Sigmoid colon (tissue), 7 donors: ENCODE measurements at regions of chr5 and their contacts with region 1.

Region 1: GRCh38 chr5:168093200-168093910 is 198.1 kb upstream of the WWC1 start:
- DNase-seq: no peak
- H3K4me3 ChIP-seq: no peak overlapping the region
- H3K27ac ChIP-seq: peak overlapping the region in 1 of 4 donors; percentile 20
- H3K4me1 ChIP-seq: peaks cover 0 to 12% (median 10%) of the 10 kb centered on the region in 4 donors
- H3K27me3 ChIP-seq: no peaks in the 10 kb centered on the region
- CTCF ChIP-seq: no peak
- EP300 ChIP-seq: no peak
- POLR2A ChIP-seq: no peak

Region 2: DNA sequence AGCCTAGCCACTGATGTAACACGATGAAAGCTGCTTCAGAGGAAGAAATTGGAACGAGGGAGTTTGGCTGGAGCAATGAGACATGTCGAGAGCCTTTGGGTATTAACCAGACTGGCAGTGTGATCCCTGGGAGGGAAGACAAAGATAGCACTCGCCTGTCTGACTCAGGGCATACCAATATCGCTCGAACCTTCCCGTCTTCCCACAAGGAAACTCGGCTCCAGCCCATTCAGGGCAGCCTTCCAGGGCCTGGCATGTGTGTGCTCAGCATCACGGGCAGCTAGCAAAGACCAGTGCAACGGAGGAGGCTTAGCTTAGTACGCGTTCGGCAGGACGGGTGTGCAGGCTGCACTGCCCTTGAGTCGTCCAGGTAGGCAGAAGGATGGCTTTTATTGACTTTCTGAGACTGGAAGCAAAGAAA is 158.8 kb before region 1 on chr5:
- intact Hi-C with region 1: loop called (anchors 10 kb)
- DNase-seq: peak; percentile 84
- H3K4me3 ChIP-seq: no peak overlapping the region
- H3K27ac ChIP-seq: peak overlapping the region in 3 of 4 donors; percentile 53 to 72 (median 69)
- H3K4me1 ChIP-seq: peaks cover 0 to 15% (median 1%) of the 10 kb centered on the region in 4 donors
- H3K27me3 ChIP-seq: no peaks in the 10 kb centered on the region
- CTCF ChIP-seq: no peak
- EP300 ChIP-seq: peak in 3 of 4 donors; percentile 44 to 70 (median 57)
- POLR2A ChIP-seq: no peak